ENCODE measurements at regions of chr19 and their contacts with region 1.

Region 1: DNA sequence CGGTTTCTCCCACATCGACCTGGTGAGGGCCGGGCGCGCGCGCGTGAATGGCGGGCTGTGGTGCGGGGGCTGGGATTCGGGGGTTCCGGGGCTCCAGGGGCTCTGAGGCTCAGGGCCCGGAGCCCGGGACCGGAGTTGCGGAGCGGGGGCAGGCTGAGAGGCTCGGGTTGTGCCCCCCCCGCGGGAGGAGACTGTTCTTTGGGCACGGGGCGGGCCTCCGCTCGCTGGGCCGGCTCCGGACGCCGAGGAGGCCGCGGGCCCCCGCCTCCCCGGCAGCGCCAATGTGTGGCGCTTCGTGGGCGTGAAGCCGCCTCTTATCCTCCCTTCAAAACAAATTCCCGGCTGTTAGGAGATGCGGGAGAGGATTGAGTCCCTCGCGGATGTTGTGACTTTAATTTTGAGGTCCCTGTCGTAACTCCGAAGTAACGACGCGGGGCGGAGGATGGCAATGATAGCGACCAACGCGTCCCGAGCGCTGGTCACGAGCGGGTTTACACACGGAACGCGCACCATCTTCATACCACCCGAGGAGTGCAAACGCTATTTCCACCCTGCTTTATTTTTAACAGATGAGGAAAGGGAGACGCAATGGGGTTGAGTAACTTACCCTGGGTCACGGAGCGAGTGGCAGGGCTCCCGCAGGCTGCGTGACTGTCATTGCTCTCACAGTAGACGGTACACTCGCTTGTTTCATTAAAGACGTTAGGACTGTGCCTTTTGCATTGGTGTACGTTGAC is 536 bp downstream of the UBA2 start:
- DNase-seq: peak in 6 of 10 donors; percentile 13 to 89 (median 18)

Region 2: GRCh38 chr19:34288381-34288780 is 140.3 kb before region 1 on chr19:
- intact Hi-C with region 1: no loop called
- DNase-seq: no peak

Region 3: GRCh38 chr19:34364830-34365462 is 63.8 kb before region 1 on chr19 and contains the start of gene GPI:
- intact Hi-C with region 1: loop called (anchors 10 kb)
- DNase-seq: peak; percentile 38 to 94 (median 62)

Region 4: DNA sequence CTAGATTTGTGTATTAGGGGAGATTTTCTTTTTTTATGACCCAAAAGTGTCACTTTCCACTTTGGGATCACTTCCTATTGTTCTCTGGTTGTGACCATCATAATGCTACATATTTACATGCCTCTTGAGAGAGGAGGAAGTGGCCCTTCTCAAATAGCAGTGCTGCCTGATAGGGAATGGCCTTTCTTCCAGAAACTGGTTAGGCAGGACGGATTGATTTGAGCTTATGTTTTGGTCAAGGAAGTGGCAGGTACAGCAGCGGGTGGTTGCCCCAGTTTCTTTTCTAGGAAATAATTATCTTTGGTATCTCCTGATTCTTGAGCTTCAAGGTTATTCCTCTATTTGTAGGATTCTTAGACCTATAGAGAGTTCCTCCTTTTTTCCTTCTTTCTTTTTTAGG is 30.9 kb after region 1 on chr19:
- intact Hi-C with region 1: no loop called
- DNase-seq: no peak